Left ventricle myocardium inferior (tissue), 1 donor: ENCODE measurements at regions of chr13 and their contacts with region 1.

Region 1: GRCh38 chr13:101757446-101758039 is 305.1 kb downstream of the ITGBL1 start:
- DNase-seq: no peak
- H3K4me3 ChIP-seq: no peak overlapping the region
- H3K27ac ChIP-seq: no peak overlapping the region
- H3K4me1 ChIP-seq: no peaks in the 10 kb centered on the region
- H3K27me3 ChIP-seq: no peaks in the 10 kb centered on the region
- CTCF ChIP-seq: peak; percentile 61

Region 2: GRCh38 chr13:101514788-101515187 is 242.8 kb before region 1 on chr13:
- intact Hi-C with region 1: loop called (anchors 2 kb)
- DNase-seq: no peak
- H3K4me3 ChIP-seq: no peak overlapping the region
- H3K27ac ChIP-seq: no peak overlapping the region
- H3K4me1 ChIP-seq: no peaks in the 10 kb centered on the region
- H3K27me3 ChIP-seq: no peaks in the 10 kb centered on the region
- CTCF ChIP-seq: peak; percentile 78

Region 3: GRCh38 chr13:101896541-101896940 is 139.0 kb after region 1 on chr13:
- intact Hi-C with region 1: no loop called
- DNase-seq: no peak
- H3K4me3 ChIP-seq: no peak overlapping the region
- H3K27ac ChIP-seq: no peak overlapping the region
- H3K4me1 ChIP-seq: peaks cover 3% of the 10 kb centered on the region
- H3K27me3 ChIP-seq: no peaks in the 10 kb centered on the region
- CTCF ChIP-seq: no peak